ENCODE measurements at regions of chr6 and their contacts with region 1.

Region 1: DNA sequence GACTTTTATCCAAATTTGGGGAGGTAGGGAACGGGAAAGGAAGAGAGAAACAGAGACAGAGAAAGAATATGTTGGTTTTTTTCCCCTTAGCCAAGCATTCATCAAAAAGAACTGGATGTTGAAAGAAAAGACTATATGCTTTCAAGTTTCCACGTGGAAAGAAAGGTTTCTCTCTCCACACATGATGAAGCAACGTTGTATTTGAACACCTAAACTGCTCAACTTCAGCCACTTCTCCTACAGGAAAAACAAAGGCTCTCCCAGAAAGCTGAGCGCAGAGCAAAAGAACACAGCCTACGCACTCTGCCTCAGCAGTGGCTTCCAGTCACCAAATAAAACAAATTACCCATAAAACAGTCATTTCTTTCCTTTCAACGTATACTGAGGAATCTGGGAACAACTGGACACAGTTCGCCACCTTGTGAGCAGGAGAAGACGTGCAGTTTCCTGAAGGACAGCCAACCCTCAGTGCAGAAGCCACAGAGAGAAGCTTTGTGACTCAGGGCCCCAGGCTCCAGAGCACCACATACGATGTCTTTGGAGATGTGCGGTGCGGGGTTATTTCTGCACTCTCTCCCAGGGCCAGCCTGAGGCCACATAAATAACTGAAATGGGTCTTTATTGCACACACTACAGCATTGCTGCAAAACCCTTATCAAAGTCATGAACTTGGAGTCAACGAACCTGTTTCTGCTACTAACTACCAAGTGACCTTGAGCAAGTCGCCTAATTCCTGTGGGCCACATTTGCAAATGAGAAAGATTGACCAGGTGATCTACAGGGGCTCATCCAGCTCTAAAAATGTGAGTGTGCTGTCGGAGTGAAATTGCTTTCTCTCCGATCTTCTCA is 10.1 kb downstream of the IL17F start:
- H3K4me3 ChIP-seq: no peak overlapping the region
- H3K27ac ChIP-seq: no peak overlapping the region; the same call in 1 of the 2 replicates
- H3K4me1 ChIP-seq: peaks cover 10% of the 10 kb centered on the region
- CTCF ChIP-seq: peak; percentile 79; the same call in 1 of the 2 replicates

Region 2: GRCh38 chr6:52049252-52050050 is 184.7 kb before region 1 on chr6:
- CTCF ChIA-PET with region 1: interaction called, 21 read pairs
- POLR2A ChIA-PET with region 1: no interaction called
- H3K4me3 ChIP-seq: no peak overlapping the region
- H3K27ac ChIP-seq: no peak overlapping the region
- H3K4me1 ChIP-seq: 0 out of 2 replicates have a peak, but pooled peaks cover 2% of the 10 kb centered on the region
- CTCF ChIP-seq: peak; percentile 24; the same call in 1 of the 2 replicates

Region 3: DNA sequence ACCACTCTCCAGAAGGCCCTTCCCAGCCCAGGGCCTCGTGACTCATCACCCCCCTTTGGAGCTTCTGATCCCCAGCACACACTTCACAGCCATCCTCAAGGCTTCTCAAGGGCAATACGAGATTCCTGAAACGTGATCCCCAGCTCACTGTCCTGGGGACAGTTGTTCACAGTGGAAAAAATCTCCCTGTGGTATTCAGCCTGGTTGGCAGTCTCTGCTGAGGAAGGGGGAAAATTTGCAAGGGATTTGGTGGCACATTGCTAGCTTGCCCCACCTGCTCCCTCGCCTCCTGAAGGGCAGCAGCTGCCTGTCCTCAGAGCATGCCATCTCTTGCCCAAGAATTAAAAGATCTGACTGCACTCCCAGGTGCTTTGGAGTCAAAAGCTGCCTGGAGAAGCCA is 126.1 kb before region 1 on chr6:
- CTCF ChIA-PET with region 1: interaction called, 10 read pairs
- POLR2A ChIA-PET with region 1: no interaction called
- H3K4me3 ChIP-seq: no peak overlapping the region
- H3K27ac ChIP-seq: no peak overlapping the region
- H3K4me1 ChIP-seq: peaks cover 10% of the 10 kb centered on the region
- CTCF ChIP-seq: no peak

Region 4: DNA sequence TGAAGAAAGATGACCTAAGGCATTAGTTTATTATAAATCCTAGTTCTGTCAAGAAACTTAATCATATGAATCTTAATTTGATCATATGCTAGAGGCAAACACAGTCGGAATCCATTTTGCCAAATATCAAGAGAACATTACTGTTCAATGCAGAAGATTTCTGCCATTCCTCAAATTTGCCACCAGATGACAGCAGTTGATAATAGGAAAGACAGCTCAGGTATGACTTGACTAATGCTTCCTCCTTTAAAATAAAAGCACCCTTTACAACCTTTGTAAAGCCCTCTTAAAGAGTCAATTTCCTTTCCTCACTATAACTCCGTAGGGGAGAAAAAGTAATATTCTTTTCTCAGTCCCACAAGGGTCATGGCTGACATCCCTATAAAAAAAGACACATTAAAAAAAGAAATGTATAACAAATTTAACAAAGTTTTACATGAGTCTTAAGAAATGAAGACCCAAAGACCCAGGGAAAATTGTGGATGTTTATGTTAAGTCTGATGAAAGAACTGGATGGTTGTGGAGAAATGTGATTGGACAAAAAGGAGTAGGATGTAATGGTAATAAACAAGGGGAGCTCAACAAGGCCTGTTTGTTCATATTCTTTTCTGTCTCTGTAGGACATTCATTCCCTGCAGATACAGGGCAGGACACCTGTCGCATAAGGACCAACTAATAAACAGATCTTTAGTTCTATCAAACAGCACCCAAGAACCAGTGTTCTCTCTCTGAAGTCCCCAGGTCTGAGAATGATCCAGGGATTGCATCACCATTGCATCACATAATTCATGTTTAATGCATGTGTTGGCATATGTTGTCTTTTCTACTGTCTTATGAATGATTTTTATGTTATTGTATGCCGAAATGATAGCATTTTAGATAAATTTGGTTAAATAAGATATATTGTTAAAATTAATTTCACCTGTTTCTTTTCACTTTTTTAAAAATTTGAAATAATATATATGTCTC is 71.0 kb before region 1 on chr6:
- CTCF ChIA-PET with region 1: interaction called, 77 read pairs
- POLR2A ChIA-PET with region 1: no interaction called
- H3K4me3 ChIP-seq: no peak overlapping the region
- H3K27ac ChIP-seq: no peak overlapping the region
- H3K4me1 ChIP-seq: peaks cover 9% of the 10 kb centered on the region; the same call in 1 of the 2 replicates
- CTCF ChIP-seq: peak; percentile 77

Region 5: GRCh38 chr6:52213127-52213526 is 21.1 kb before region 1 on chr6:
- CTCF ChIA-PET with region 1: interaction called, 10 read pairs
- POLR2A ChIA-PET with region 1: no interaction called
- H3K4me3 ChIP-seq: no peak overlapping the region
- H3K27ac ChIP-seq: no peak overlapping the region
- H3K4me1 ChIP-seq: no peaks in the 10 kb centered on the region
- CTCF ChIP-seq: no peak

Region 6: DNA sequence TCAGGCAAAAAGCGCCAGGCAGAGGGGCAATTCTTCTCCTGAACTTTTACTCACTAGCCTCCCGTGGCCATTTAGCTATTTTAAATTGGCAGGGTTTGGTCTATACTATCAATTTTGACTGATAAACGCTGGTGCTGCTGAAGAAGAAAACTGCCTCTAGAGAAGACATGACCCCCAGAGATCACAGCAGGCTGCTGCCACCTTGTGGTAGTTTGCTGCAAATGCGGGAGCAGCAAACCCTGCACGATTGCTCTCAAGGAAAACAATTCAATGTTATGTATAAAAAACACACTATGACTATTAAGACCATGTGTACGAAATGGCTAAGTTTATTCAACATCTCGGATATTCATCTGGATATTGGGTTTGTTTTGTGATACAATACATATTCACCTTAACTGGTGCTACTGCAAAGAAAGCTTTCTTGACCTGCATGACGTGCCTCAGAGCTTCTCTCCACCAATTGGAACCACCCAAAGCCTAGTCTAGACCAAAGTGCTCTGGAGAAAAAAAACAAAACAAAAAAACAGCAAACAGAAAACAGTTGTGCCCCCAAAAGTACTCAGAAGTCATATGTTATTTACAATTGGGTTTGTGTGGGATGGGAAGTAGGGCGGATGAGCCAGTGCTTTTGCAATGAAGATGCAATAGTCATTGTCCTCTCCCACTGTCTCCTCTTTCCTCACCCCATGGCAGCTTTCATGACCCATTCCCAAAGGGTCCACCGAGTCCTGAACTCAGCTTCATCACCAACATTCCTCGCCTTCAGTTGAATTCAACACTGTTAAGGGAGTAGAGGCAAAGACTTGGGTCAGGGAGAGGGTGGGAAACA is 29.7 kb after region 1 on chr6:
- CTCF ChIA-PET with region 1: interaction called, 76 read pairs
- POLR2A ChIA-PET with region 1: no interaction called
- H3K4me3 ChIP-seq: no peak overlapping the region
- H3K27ac ChIP-seq: peak overlapping the region; percentile 29; the same call in 1 of the 2 replicates
- H3K4me1 ChIP-seq: no peaks in the 10 kb centered on the region
- CTCF ChIP-seq: peak; percentile 83

Measured in HEK293 (cell line).